Tibial artery (tissue), 4 donors: ENCODE measurements at regions of chr20 and their contacts with region 1.

Region 1: GRCh38 chr20:32902456-32903420 is 44.0 kb downstream of the EFCAB8 start:
- DNase-seq: no peak
- H3K4me3 ChIP-seq: no peak overlapping the region
- H3K27ac ChIP-seq: no peak overlapping the region
- H3K4me1 ChIP-seq: no peaks in the 10 kb centered on the region
- H3K27me3 ChIP-seq: no peaks in the 10 kb centered on the region
- CTCF ChIP-seq: peak; percentile 65 to 72

Region 2: DNA sequence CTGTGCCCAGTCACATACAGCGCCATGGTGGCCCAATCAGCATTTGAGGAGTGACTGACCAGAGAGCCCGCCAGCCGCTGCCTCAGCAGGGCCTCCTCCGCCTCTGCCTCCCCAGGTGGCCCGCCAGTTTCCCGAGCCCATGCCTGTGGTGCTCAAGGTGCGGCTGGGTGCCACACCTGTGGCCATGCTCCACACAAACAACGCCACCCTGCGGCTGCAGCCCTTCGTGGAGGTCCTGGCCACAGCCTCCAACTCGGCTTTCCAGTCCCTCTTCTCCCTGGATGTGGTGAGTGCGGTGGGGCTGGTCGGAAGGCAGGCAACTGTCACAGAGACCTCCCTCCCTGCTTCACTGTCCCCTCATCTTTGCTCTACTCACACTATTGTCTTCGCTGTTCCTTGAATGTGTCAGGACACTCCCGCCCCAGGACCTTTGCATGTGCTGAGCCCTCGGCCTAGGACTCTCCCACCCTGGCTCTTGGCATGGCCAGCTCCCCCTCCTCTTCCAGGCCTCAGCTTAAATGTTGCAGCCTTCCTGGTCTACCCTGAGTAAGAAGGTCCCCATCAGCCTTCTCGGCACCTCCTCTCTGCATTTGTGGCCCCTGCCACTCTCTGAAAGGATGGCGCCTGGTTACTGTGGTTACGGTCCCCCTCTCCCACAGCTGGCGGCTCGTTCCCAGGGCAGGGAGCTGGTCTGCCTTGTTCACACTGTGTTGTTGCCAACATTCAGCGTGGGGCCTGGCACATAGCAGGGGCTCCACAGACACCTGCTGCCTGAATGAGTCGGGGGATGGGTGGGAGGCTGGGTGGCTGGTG is 116.9 kb after region 1 on chr20:
- intact Hi-C with region 1: no loop called
- DNase-seq: no peak
- H3K4me3 ChIP-seq: no peak overlapping the region
- H3K27ac ChIP-seq: no peak overlapping the region
- H3K4me1 ChIP-seq: no peaks in the 10 kb centered on the region
- H3K27me3 ChIP-seq: peaks cover 0 to 14% of the 10 kb centered on the region in 2 donors
- CTCF ChIP-seq: no peak

Region 3: GRCh38 chr20:33031531-33031930 is 128.8 kb after region 1 on chr20 and contains the start of gene BPIFB6:
- intact Hi-C with region 1: no loop called
- DNase-seq: no peak
- H3K4me3 ChIP-seq: no peak within 1 kb of the TSS
- H3K27ac ChIP-seq: no peak within 1 kb of the TSS
- H3K4me1 ChIP-seq: no peaks in the 10 kb centered on the region
- H3K27me3 ChIP-seq: peaks cover 0 to 17% of the 10 kb centered on the region in 2 donors
- CTCF ChIP-seq: no peak

Region 4: DNA sequence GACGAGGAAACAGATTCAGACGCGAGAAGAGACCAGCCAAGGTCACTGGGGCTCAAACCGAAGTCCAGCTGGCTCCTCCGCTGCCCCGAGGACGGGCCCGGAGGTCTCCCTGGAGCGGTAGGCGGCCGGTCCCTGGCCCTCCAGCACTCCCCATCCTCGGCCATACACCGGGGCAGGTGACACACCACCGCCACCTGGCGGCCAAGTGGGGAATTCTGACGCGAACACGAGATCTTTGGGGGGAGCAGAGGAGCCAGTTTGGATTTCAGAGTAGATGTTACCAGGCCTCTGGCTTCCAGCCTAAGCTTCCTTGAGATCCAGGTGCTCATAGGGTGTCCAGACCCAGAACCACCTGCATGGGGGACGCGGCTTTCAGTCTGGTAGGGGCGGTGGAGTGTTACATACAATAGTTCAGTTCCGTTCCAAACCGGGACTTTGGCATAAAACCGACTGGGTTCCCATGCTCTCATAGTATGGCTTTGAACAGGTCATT is 396.4 kb after region 1 on chr20:
- intact Hi-C with region 1: loop called (anchors 5 kb)
- DNase-seq: peak; percentile 36 to 72
- H3K4me3 ChIP-seq: no peak overlapping the region
- H3K27ac ChIP-seq: no peak overlapping the region
- H3K4me1 ChIP-seq: peaks cover 0 to 4% (median 2%) of the 10 kb centered on the region in 4 donors
- H3K27me3 ChIP-seq: peaks cover 0 to 41% of the 10 kb centered on the region in 2 donors
- CTCF ChIP-seq: peak; percentile 65 to 75